OCI-LY7 (cell line): ENCODE measurements at regions of chr7 and their contacts with region 1.

Region 1: DNA sequence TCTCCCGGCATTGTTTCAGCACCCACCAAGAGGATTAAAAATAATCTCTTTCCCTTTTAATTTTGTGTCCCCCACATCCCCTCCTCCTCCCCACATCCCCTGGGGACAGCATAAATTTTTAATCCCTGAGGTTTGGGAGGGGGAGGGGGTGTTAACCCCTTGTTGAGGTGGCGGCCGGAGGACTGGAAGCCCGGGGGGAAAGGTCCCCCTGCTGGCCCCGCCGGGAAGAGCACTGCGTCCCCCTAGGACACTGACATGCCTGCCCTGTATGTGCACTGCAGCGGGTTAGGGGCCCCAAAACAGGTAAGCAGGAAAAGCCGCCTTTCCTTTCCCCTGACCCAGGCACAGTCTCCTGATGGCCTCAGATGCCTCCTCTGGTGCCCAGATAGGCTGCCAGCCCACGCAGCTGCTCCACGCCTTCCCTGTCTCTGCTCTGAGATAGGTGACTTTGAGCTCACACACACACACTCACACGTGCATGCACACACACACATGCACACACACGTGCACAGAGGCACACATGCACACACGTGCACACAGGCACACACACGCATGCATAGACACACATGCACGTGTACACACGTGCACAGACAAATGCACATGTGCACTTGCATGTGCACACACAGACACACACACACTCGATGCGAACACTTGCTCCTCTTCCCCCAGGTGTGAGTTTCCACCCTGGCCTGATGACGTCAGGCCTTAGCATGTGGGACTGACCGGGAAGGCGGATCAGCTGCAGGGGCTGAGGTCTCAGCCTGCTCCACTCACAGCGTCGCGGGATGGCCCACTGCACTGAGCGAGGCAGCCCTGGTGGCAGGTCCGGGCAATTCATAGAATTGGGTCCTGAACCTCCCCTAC is 12.3 kb downstream of the CNPY1 start:
- DNase-seq: peak; percentile 14
- H3K4me3 ChIP-seq: no peak overlapping the region
- H3K27ac ChIP-seq: no peak overlapping the region
- H3K4me1 ChIP-seq: no peaks in the 10 kb centered on the region
- CTCF ChIP-seq: peak; percentile 71

Region 2: GRCh38 chr7:154903083-154903731 is 630.9 kb before region 1 on chr7:
- CTCF ChIA-PET with region 1: no interaction called
- POLR2A ChIA-PET with region 1: no interaction called
- intact Hi-C with region 1: no loop called
- DNase-seq: no peak
- H3K4me3 ChIP-seq: no peak overlapping the region
- H3K27ac ChIP-seq: no peak overlapping the region
- H3K4me1 ChIP-seq: no peaks in the 10 kb centered on the region
- CTCF ChIP-seq: no peak

Region 3: DNA sequence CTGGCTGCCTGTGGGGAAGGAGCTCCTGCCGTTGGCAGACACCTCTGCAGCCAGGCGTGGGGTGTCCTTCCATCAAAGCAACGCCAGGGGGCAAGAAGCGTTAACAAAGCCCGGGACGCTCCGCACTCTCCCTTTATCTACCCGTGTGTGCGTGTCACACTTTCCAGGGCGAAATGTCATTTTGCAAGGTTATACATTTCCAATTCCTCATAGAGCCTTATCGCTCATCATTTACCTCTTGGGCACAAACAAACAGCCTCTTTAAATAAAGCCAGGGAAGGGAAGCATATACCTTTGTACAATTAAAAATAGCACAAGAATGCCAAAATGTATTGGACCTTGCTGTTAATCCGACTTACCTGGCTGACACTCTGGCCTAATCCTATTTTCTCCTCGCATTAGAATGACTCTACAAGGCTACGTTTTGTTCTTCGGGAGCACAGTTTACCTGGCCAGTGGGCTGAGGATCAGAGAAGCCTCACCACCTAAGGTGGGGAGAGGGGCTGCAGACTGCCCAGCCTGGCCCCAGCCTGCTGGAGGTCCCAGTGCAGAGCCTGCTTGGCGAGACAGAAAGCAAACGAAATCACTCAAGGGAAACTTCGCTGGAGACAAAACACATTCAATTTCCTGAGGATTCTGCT is 153.7 kb before region 1 on chr7:
- CTCF ChIA-PET with region 1: no interaction called
- POLR2A ChIA-PET with region 1: no interaction called
- intact Hi-C with region 1: loop called (anchors 10 kb)
- DNase-seq: peak; percentile 68
- H3K4me3 ChIP-seq: no peak overlapping the region
- H3K27ac ChIP-seq: no peak overlapping the region
- H3K4me1 ChIP-seq: no peaks in the 10 kb centered on the region
- CTCF ChIP-seq: peak; percentile 80